Ascending aorta (tissue), 2 donors: ENCODE measurements at regions of chr1 and their contacts with region 1.

Region 1: GRCh38 chr1:225881969-225882693 is at the start of gene TMEM63A:
- DNase-seq: peak; percentile 69 to 96
- H3K4me3 ChIP-seq: peak within 1 kb of the TSS; percentile 57 to 90
- H3K27ac ChIP-seq: peak within 1 kb of the TSS; percentile 87 to 90
- H3K4me1 ChIP-seq: peaks cover 25 to 41% of the 10 kb centered on the region in 2 donors
- H3K27me3 ChIP-seq: no peaks in the 10 kb centered on the region
- CTCF ChIP-seq: peak; percentile 45 to 56 (median 53)
- total RNA-seq, gene TMEM63A: 41.3 TPM

Region 2: GRCh38 chr1:225817611-225818061 is 64.5 kb before region 1 on chr1:
- intact Hi-C with region 1: loop called (anchors 5 kb)
- DNase-seq: peak; percentile 84 to 96
- H3K4me3 ChIP-seq: peak overlapping the region in 1 of 2 donors; percentile 37
- H3K27ac ChIP-seq: peak overlapping the region; percentile 89 to 90
- H3K4me1 ChIP-seq: peaks cover 38 to 62% of the 10 kb centered on the region in 2 donors
- H3K27me3 ChIP-seq: no peaks in the 10 kb centered on the region
- CTCF ChIP-seq: no peak

Region 3: DNA sequence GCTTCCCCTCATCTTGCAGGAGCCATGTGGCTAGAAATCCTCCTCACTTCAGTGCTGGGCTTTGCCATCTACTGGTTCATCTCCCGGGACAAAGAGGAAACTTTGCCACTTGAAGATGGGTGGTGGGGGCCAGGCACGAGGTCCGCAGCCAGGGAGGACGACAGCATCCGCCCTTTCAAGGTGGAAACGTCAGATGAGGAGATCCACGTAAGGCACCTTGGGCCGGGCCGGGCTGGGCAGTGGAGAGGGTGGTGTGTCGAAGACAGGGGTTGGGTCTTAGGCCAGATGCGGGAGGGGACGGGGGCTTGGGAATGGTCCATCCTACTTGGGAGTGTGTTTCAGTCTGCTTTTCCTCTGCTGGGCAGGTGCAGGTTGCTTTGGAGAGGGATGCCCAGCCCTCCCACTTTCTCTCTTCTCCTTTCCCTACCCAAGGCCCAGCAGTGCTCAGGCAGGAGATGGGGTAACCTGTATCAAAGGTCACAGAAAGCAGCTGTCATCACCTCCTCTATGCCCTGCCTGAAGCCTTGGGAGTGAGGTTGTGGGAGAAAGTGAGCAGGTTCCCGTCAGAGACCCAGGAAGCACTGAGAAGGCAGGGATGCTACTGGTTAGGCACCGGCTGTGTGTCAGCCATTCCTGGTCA is 53.3 kb before region 1 on chr1:
- intact Hi-C with region 1: no loop called
- DNase-seq: no peak
- H3K4me3 ChIP-seq: no peak overlapping the region
- H3K27ac ChIP-seq: peak overlapping the region in 1 of 2 donors; percentile 21
- H3K4me1 ChIP-seq: peaks cover 0 to 15% of the 10 kb centered on the region in 2 donors
- H3K27me3 ChIP-seq: no peaks in the 10 kb centered on the region
- CTCF ChIP-seq: no peak

Region 4: DNA sequence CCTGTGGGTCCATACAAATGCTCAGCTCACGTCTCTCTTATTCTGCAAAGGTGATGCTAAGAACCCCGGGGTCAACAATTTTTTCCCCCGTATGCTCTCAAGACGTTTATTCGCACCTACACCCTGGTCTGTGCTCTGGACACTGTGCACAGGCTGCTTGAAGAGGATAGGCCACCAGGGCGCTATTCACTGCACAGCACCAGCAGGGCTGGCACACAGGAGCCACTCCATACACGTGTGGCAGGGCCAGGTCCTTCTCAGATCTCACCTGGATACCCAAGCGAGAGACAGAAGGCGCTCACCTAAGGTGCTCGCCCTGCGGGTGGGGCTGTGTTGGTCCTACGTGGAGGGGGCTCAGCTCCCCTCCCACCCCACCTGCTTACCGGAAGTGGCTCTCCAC is 16.6 kb before region 1 on chr1:
- intact Hi-C with region 1: loop called (anchors 2 kb)
- DNase-seq: no peak
- H3K4me3 ChIP-seq: no peak overlapping the region
- H3K27ac ChIP-seq: peak overlapping the region in 1 of 2 donors; percentile 39
- H3K4me1 ChIP-seq: peaks cover 0 to 3% of the 10 kb centered on the region in 2 donors
- H3K27me3 ChIP-seq: no peaks in the 10 kb centered on the region
- CTCF ChIP-seq: no peak

Region 5: GRCh38 chr1:225911191-225912130 is 29.3 kb after region 1 on chr1:
- intact Hi-C with region 1: loop called (anchors 2 kb)
- DNase-seq: peak in 1 of 2 donors; percentile 79
- H3K4me3 ChIP-seq: no peak overlapping the region
- H3K27ac ChIP-seq: no peak overlapping the region
- H3K4me1 ChIP-seq: peaks cover 0 to 4% of the 10 kb centered on the region in 2 donors
- H3K27me3 ChIP-seq: no peaks in the 10 kb centered on the region
- CTCF ChIP-seq: peak; percentile 92 to 97 (median 96)